HCT116 (cell line): ENCODE measurements at regions of chr4 and their contacts with region 1.

Region 1: GRCh38 chr4:113781439-113782040 is 20.0 kb upstream of the CAMK2D start:
- DNase-seq: no peak
- ATAC-seq: peak; percentile 71
- H3K4me3 ChIP-seq: no peak overlapping the region
- H3K27ac ChIP-seq: no peak overlapping the region
- H3K4me1 ChIP-seq: no peaks in the 10 kb centered on the region
- H3K27me3 ChIP-seq: no peaks in the 10 kb centered on the region
- CTCF ChIP-seq: peak; percentile 39 to 75 (median 56); a peak in 5 of 6 replicates
- POLR2A ChIP-seq: no peak
- RAD21 ChIP-seq: peak; percentile 51

Region 2: DNA sequence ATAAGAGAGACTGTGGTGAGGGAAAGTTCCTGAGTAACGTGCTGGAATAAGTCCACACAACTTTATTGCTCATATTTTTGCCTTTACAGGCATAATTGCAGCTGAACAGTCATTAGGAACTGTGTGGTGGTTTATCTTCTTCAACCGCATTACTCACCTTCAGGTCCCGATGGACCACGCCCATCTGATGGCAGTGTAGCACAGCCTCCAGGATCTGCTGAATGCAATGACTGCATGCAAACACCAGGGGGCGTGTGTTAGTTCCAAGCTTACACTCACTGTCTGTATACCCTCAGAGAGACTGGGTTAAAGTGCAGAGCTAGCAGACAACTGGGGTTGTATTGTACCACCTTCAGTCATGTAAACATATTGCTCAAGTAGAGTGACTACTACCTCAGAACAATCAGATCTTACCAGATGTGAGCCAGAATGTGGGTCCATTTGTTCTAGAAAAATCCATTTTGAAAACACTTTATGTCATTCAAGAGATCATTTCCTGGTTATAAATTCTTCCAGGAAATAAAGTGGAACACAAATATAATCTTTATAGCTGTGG is 234.0 kb before region 1 on chr4:
- CTCF ChIA-PET with region 1: no interaction called
- POLR2A ChIA-PET with region 1: no interaction called
- RAD21 ChIA-PET with region 1: no interaction called
- intact Hi-C with region 1: no loop called
- DNase-seq: peak; percentile 95
- ATAC-seq: peak; percentile 100
- H3K4me3 ChIP-seq: no peak overlapping the region
- H3K27ac ChIP-seq: no peak overlapping the region
- H3K4me1 ChIP-seq: peaks cover 6 to 13% of the 10 kb centered on the region in 2 experiments; a peak in 3 of 4 replicates
- H3K27me3 ChIP-seq: no peaks in the 10 kb centered on the region
- CTCF ChIP-seq: peak; percentile 81 to 98 (median 96)
- POLR2A ChIP-seq: no peak
- RAD21 ChIP-seq: peak; percentile 85

Region 3: DNA sequence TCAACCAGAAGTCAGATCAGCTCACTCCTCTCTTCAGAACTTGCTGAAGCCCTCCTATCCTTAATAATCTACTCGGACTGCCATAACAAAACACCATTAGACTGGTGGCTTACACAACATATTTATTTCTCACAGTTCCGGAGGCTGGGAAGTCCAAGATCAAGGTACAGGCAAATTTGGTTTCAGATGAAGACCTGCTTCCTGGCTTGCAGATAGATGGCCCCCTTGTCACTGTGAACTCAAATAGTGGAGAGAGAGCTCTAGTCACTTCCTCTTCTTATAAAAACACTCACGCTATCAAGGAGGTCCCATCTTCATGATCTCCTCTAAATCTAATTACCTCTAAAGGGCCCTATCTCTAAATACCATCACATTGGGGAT is 145.1 kb before region 1 on chr4:
- CTCF ChIA-PET with region 1: no interaction called
- POLR2A ChIA-PET with region 1: no interaction called
- RAD21 ChIA-PET with region 1: no interaction called
- intact Hi-C with region 1: no loop called
- DNase-seq: no peak
- ATAC-seq: peak; percentile 50; the same call in 1 of the 2 replicates
- H3K4me3 ChIP-seq: no peak overlapping the region
- H3K27ac ChIP-seq: no peak overlapping the region
- H3K4me1 ChIP-seq: peaks cover 13 to 19% of the 10 kb centered on the region in 2 experiments; a peak in 3 of 4 replicates
- H3K27me3 ChIP-seq: no peaks in the 10 kb centered on the region
- CTCF ChIP-seq: no peak
- POLR2A ChIP-seq: no peak
- RAD21 ChIP-seq: peak; percentile 29; the same call in 1 of the 2 replicates

Region 4: DNA sequence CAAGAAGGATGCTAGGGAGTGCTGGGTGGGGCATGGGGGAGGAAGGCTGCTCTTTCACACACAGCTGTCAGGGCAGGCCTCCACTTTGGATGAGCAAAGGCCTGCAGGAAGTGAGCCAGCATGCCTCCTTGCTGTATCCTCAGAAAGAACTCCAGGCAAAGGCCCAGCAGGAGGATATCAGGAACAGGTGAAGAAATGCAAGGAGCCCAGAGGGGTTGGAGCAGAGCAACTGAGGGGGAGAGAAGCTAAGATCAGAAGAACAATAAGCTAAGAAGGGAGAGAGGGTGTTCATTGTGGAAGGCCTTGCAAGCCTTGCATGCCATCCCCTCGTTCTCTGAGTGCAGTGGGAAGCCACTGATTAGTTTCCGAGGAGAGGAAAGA is 135.1 kb before region 1 on chr4:
- CTCF ChIA-PET with region 1: no interaction called
- POLR2A ChIA-PET with region 1: no interaction called
- RAD21 ChIA-PET with region 1: no interaction called
- intact Hi-C with region 1: no loop called
- DNase-seq: peak; percentile 18
- ATAC-seq: peak; percentile 68
- H3K4me3 ChIP-seq: no peak overlapping the region
- H3K27ac ChIP-seq: peak overlapping the region; percentile 33
- H3K4me1 ChIP-seq: peaks cover 24 to 33% of the 10 kb centered on the region in 2 experiments
- H3K27me3 ChIP-seq: no peaks in the 10 kb centered on the region
- CTCF ChIP-seq: no peak
- POLR2A ChIP-seq: no peak
- RAD21 ChIP-seq: no peak

Region 5: GRCh38 chr4:113692809-113693411 is 88.6 kb before region 1 on chr4:
- CTCF ChIA-PET with region 1: no interaction called
- POLR2A ChIA-PET with region 1: no interaction called
- RAD21 ChIA-PET with region 1: no interaction called
- intact Hi-C with region 1: no loop called
- DNase-seq: no peak
- ATAC-seq: no peak
- H3K4me3 ChIP-seq: no peak overlapping the region
- H3K27ac ChIP-seq: no peak overlapping the region
- H3K4me1 ChIP-seq: no peaks in the 10 kb centered on the region; a peak in 1 of 4 replicates
- H3K27me3 ChIP-seq: no peaks in the 10 kb centered on the region
- CTCF ChIP-seq: no peak
- POLR2A ChIP-seq: no peak
- RAD21 ChIP-seq: no peak

Region 6: DNA sequence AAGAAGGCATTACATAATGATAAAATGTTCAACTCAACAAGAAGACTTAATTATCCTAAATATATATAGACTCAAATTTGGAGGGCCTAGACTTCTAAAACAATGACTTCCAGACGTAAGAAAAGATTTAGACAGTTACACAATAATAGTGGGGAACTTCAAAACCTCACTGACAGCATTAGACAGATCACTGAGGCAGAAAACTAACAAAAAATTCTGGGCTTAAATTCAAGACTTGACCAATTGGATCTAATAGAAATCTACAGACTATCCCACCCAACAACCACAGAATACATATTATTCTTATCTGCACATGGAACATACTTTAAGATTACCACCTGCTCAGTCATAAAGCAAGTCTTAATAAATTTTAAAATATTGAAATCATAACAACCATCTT is 291.2 kb after region 1 on chr4:
- CTCF ChIA-PET with region 1: no interaction called
- POLR2A ChIA-PET with region 1: no interaction called
- RAD21 ChIA-PET with region 1: no interaction called
- intact Hi-C with region 1: loop called (anchors 5 kb)
- DNase-seq: no peak
- ATAC-seq: no peak
- H3K4me3 ChIP-seq: no peak overlapping the region
- H3K27ac ChIP-seq: no peak overlapping the region
- H3K4me1 ChIP-seq: peaks cover 0 to 8% of the 10 kb centered on the region in 2 experiments; a peak in 2 of 4 replicates
- H3K27me3 ChIP-seq: no peaks in the 10 kb centered on the region
- CTCF ChIP-seq: no peak
- POLR2A ChIP-seq: no peak
- RAD21 ChIP-seq: no peak